ENCODE measurements at regions of chr1 and their contacts with region 1.

Region 1: DNA sequence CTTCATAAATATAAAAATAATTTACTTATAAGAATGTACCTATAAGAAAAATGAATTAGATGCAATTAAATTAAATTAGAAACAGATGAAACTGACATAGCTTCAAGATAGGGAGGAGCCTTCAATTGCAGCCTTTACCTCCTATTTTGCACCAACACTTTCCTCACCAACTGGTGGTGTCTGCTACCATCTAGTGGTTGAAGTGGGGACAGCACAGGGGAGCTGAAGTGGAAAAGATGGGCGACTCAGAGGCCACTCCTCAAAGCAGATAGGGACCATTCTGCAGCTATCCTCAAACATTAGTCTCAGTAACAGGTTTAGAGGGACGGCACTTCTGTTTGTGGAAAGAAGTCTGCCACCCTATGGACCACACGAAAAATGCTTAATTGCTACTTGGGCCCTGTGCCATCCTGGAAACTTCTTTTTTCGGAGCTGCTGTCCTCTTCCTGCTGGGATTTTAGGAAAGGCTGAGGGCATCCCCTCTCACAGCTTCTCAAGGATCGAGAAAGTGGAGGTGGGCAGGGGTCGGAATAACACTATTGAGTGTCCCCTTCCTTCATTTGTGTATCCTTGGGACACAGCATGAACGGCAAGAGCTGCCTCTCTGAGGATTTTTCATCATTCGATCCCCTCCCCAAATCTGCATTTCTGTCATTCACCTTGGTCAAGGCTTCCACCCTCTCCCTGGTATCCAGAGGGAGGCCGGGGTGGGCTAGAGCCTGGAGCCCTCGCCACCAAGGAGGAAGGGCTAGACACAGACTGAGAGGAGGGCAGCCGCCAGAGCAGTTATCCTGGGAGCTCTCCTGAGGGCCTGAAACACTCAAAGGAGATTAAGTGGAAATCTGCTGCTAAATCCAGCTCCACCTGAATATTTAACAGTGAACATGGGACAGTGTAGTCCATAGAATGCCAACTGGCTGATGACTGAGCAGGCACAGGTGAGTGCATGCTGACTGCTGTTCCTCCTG is 9.6 kb downstream of the PROK1 start:
- DNase-seq: peak; percentile 88
- ATAC-seq: peak; percentile 95
- H3K4me3 Mint-ChIP-seq: no peak overlapping the region
- H3K27ac Mint-ChIP-seq: no peak overlapping the region
- H3K4me1 Mint-ChIP-seq: no peaks in the 10 kb centered on the region
- H3K27me3 Mint-ChIP-seq: no peaks in the 10 kb centered on the region

Region 2: DNA sequence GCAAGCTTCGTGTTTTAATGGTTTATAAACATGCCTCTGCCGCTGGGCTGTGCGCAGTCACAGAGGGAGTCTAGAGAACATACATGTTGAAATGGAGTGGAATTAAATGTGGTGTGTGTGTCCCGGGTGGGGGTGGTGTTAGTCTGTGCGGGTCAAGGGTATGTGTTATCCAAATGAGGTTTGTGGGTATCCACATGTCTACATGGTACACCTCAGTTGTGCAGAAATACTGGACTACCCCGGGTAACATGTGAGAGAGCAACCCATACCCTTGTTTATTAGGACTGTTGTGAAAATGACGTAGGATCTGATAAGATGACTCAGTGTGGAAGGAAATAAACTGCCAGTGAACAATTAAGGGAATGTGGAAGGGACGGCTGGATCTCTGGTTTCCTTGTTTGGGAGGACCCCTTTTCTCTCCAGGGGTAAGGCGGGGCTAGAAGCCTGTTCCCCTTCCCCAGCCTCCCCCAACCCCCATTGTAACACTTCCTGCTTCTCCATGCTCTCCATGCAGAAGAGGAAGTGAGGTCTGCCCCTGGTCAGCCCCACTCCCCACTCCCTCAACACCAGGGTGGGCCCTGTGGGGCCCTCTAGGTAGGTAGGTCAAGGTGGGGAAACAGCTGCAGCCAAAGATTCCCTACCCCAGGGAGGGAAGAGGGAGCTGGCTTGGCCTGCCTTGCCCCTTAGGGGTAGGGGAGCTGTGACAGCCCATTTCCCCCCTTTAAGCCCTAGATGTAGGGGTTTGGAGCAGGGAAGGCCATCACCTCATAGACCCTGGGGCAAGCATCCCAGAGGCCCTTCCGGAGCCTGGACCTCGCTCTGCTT is 697.5 kb before region 1 on chr1:
- CTCF ChIA-PET with region 1: no interaction called
- POLR2A ChIA-PET with region 1: no interaction called
- intact Hi-C with region 1: no loop called
- DNase-seq: no peak
- ATAC-seq: no peak
- H3K4me3 Mint-ChIP-seq: no peak overlapping the region
- H3K27ac Mint-ChIP-seq: no peak overlapping the region
- H3K4me1 Mint-ChIP-seq: no peaks in the 10 kb centered on the region
- H3K27me3 Mint-ChIP-seq: no peaks in the 10 kb centered on the region

Region 3: DNA sequence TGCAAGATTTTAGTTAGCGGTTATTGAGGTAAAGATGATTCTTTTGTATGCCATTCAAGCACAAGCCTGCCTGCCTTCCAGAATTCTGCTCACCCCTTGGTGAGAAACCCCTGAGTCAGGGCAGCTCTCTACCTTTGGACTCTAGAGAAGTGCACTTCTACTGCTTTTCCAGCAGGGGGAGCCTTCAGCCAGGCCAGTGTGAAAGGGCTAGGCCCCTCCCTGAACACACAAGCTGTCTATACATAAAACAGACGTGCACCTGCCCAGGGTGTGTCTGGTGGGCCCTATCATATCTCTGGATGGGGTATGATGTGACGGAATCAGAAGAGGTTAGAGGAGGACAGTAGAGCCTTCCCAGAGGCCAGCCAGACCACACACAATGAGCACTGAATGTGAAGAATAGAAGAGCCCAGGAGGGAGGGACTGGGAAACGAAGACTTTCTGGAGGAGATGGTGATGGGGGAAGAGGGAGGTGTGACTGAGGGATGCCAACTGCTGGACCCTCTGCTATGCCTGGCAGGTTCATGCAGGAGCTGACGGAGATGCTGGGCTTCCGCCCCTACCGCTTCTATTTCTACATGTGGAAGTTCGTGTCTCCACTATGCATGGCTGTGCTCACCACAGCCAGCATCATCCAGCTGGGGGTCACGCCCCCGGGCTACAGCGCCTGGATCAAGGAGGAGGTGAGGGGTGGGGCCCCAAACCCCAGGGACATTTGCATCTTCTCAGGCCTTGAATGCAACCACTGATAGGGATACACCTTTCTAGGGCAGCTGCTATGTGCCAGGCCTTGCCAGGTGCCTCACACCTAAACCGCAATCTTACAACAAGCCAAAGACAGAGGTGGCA is 263.4 kb before region 1 on chr1:
- CTCF ChIA-PET with region 1: interaction called, 81 read pairs
- POLR2A ChIA-PET with region 1: no interaction called
- intact Hi-C with region 1: loop called (anchors 1 kb)
- DNase-seq: peak; percentile 77
- ATAC-seq: peak; percentile 97
- H3K4me3 Mint-ChIP-seq: no peak overlapping the region
- H3K27ac Mint-ChIP-seq: no peak overlapping the region
- H3K4me1 Mint-ChIP-seq: no peaks in the 10 kb centered on the region
- H3K27me3 Mint-ChIP-seq: no peaks in the 10 kb centered on the region

Region 4: DNA sequence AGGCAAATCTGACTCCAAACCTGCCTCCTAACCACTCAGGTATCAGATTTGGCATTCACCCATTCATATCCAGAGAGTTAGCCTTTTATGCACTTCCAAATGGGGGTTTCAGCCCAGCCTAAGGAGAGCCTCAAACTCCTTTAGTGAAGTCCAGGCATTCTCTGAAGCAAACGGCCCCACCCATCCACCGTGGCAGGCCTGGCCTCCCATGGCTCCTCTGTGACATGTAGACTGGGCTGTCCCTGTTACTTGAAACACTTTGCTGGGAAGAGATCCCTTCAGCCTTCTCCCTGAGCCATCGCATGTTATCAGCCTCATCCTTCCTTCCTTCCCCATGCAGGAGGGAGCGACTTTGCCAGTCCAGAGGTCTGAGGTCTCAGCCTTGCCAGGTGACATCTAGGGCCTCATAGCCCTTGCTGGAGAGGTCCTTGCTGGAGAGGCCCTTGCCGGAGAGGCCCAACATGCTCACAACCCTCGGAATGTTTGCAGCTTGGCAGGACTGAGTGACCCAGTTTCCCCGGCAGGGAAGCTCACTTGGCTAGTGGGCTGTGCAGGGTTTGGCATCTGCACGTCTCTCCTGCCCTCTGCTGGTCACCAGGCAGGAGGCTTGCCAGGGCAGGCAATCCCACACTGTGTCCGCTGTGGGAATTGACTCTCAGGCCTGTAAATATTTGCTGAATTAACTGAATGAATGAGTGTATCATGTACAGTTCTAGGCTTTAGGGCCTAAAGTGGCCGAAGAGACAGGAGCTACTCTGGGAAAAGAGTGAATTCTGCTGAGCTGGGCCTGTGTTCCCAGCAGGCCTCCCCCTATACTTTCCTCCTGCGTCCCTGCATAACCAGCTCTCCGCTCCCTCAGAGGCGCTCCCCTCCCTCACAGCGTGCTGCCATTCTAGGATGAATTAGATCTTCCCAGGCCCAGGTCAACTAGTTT is 148.1 kb before region 1 on chr1:
- CTCF ChIA-PET with region 1: interaction called, 11 read pairs
- POLR2A ChIA-PET with region 1: no interaction called
- intact Hi-C with region 1: loop called in 1 of 2 experiments (anchors 2 kb)
- DNase-seq: peak; percentile 86
- ATAC-seq: peak; percentile 98
- H3K4me3 Mint-ChIP-seq: no peak overlapping the region
- H3K27ac Mint-ChIP-seq: no peak overlapping the region
- H3K4me1 Mint-ChIP-seq: no peaks in the 10 kb centered on the region
- H3K27me3 Mint-ChIP-seq: no peaks in the 10 kb centered on the region

Region 5: DNA sequence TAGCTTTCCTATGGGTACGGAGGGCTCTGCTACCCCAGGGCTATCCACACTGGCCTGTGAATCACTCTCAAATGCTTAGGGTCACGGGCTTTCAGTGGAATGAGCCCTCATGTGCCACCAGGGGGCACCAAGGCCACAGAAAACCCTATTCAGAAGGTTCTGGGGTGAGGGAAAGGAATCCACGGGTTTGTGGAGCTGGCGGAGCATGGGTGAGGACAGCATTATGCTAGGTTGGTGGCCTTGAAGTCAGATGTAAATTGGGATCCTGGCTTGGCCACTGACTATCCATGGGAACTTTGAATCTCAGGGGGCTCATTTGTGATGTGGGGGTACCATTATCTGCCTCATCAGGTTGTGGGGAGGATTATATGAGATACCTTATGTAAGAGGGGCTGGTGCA is 48.0 kb before region 1 on chr1:
- CTCF ChIA-PET with region 1: interaction called, 81 read pairs
- POLR2A ChIA-PET with region 1: no interaction called
- intact Hi-C with region 1: loop called (anchors 1 kb)
- DNase-seq: peak; percentile 78
- ATAC-seq: peak; percentile 50
- H3K4me3 Mint-ChIP-seq: no peak overlapping the region
- H3K27ac Mint-ChIP-seq: no peak overlapping the region
- H3K4me1 Mint-ChIP-seq: peaks cover 11% of the 10 kb centered on the region
- H3K27me3 Mint-ChIP-seq: no peaks in the 10 kb centered on the region

Region 6: DNA sequence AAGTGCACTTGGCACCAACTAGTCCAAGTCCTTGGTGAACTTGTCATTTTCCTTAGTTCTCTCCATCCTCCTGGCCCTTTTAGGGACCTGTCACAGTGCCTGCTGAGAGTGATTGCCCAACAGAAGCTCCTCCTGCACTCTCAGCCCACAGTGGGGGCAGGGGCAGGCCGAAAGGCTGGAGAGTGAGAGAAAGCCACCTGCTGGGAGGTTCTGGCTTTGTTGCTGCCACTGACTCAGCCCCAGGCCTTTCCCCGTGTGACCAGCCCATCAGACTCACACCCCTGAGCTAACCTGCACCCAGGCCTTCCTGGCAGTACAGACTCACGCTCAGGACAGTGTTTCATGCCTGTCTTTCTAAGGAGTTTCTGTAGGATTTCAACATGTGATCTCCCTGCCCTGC is 26.7 kb before region 1 on chr1:
- CTCF ChIA-PET with region 1: interaction called, 14 read pairs
- POLR2A ChIA-PET with region 1: no interaction called
- intact Hi-C with region 1: no loop called
- DNase-seq: peak; percentile 7
- ATAC-seq: no peak
- H3K4me3 Mint-ChIP-seq: no peak overlapping the region
- H3K27ac Mint-ChIP-seq: no peak overlapping the region
- H3K4me1 Mint-ChIP-seq: no peaks in the 10 kb centered on the region
- H3K27me3 Mint-ChIP-seq: peaks cover 3% of the 10 kb centered on the region

Measured in activated CD4-positive, alpha-beta T cell treated with anti-CD3 and anti-CD28 coated beads for 36 hours (primary cell).